ENCODE measurements at regions of chr10 and their contacts with region 1.

Region 1: DNA sequence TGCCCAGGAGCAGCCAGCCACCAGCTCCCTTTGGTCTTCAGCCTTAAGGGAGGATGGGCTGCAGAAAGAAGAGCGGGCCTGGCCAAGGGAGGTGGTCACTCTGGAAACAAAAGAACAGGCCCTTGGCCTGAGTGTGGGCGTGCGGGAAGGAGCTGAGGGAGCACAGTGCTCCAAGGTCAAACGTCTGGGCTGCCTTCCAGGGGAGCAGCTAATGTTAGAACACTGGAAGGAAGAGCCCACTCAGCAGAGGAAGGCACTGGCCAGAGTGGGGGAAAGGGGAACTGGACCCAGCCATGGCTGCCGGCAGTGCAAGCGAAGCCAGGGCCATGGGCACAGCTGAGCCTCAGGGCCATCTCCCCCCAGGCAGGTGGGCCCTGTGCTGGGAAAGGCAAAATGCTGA is 42.7 kb downstream of the FAM53B start:
- DNase-seq: peak; percentile 96
- ATAC-seq: peak; percentile 80

Region 2: GRCh38 chr10:124647421-124648130 is 53.9 kb before region 1 on chr10:
- intact Hi-C with region 1: loop called (anchors 5 kb)
- DNase-seq: peak; percentile 87
- ATAC-seq: peak; percentile 40